ENCODE measurements at regions of chr2 and their contacts with region 1.

Region 1: GRCh38 chr2:241268716-241269442 is 46.6 kb downstream of the HDLBP start:
- DNase-seq: no peak
- ATAC-seq: no peak

Region 2: DNA sequence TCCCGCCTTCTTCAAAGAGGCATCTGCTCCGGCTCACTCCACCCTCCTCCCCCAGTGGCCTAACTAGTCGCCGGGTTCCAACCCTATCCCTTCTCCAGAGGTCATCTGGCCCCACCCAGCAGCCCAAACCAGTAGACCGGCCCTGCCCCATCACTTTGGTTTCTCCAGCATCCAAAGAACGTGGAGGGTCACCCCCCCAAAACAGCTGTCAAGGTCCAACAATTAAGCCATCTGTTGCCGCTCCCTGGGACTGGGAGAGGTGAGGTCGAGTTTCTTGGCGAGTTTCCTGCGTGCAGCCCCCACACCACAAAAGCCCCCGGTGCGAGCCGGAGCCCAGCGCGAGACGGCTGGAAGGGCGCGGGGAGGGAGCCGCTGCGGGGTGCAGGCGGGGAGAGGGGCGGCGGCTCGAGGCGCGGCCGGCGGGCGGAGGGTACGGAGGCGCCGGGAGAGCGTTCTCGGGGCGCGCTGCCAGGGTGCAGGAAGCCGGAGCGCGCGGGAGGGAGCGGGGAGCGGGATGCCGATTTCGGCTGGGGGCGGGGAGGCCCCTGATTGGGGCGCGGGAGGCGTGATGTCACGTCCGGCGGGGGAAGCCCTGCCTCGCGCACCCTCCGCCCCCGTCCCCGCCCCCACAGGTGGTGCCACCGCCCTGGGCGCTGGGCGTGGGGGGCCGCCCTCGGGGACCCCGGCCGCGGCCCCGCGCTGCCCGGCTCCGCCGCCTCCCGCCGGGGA is 834.0 kb before region 1 on chr2:
- intact Hi-C with region 1: no loop called
- DNase-seq: peak; percentile 95
- ATAC-seq: peak; percentile 80

Region 3: GRCh38 chr2:241321886-241322285 is 53.0 kb after region 1 on chr2:
- intact Hi-C with region 1: loop called (anchors 2 kb)
- DNase-seq: no peak
- ATAC-seq: no peak